ENCODE measurements at regions of chr20 and their contacts with region 1.

Region 1: GRCh38 chr20:44080646-44081267 is 106.2 kb downstream of the JPH2 start:
- DNase-seq: peak; percentile 60
- H3K4me3 ChIP-seq: no peak overlapping the region
- H3K27ac ChIP-seq: peak overlapping the region; percentile 0
- H3K4me1 ChIP-seq: peaks cover 24% of the 10 kb centered on the region
- H3K27me3 ChIP-seq: no peaks in the 10 kb centered on the region
- CTCF ChIP-seq: peak; percentile 100

Region 2: DNA sequence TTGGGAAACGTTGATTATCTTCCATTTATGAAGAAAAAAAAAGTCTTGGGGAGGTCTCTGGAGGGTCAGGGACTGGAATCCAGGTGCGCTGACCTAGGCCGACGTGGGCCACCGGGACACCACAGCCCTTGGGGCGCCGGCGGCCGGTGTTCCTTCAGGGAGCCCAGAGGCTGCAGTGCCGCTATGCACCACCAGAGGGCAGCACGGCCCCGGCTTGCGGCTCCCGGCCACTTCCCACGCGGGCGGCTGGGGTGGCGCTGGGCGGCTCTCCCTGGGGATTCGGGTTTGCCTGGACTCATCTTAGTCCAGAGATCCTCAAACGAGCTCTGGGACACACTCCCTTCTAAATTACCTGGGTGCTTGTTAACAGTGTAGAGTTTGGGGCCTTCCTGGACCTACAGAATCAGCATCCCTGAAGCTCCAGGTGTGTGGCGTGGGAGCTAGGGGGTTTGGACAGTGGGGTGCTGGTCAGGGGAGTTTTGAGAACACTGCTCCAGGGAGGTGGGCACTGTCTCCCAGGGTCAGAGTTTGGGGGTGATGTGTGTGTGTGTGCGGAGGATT is 330.9 kb before region 1 on chr20:
- intact Hi-C with region 1: loop called (anchors 5 kb)
- DNase-seq: peak; percentile 80
- H3K4me3 ChIP-seq: no peak overlapping the region
- H3K27ac ChIP-seq: no peak overlapping the region
- H3K4me1 ChIP-seq: peaks cover 5% of the 10 kb centered on the region
- H3K27me3 ChIP-seq: peaks cover 56% of the 10 kb centered on the region
- CTCF ChIP-seq: peak; percentile 100

Region 3: GRCh38 chr20:44028868-44029847 is 51.6 kb before region 1 on chr20:
- intact Hi-C with region 1: no loop called
- DNase-seq: no peak
- H3K4me3 ChIP-seq: no peak overlapping the region
- H3K27ac ChIP-seq: no peak overlapping the region
- H3K4me1 ChIP-seq: no peaks in the 10 kb centered on the region
- H3K27me3 ChIP-seq: peaks cover 24% of the 10 kb centered on the region
- CTCF ChIP-seq: no peak

Region 4: DNA sequence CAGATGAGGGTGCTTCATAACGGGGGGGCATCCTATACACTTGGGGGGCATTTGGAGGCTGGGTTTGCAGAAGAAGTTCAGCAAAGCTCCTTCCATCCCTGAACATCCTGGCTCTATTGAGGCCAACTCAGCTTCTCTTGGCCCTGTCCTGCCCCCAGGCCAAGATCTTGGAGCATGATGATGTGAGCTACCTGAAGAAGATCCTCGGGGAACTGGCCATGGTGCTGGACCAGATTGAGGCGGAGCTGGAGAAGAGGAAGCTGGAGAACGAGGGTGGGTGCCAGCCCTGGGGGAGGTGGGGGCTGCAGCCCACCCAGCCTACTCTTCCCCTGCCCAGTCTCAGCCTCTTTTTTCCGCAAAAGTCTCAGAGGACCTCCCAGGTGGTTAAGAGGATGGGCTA is 183.5 kb after region 1 on chr20:
- intact Hi-C with region 1: no loop called
- DNase-seq: no peak
- H3K4me3 ChIP-seq: no peak overlapping the region
- H3K27ac ChIP-seq: no peak overlapping the region
- H3K4me1 ChIP-seq: peaks cover 8% of the 10 kb centered on the region
- H3K27me3 ChIP-seq: no peaks in the 10 kb centered on the region
- CTCF ChIP-seq: no peak

Measured in left ventricle myocardium inferior (tissue), 1 donor.